ENCODE measurements at regions of chr15 and their contacts with region 1.

Region 1: GRCh38 chr15:68833700-68834331 is 13.1 kb upstream of the ANP32A start:
- DNase-seq: no peak
- ATAC-seq: no peak
- H3K4me3 ChIP-seq: no peak overlapping the region
- H3K27ac ChIP-seq: no peak overlapping the region
- H3K4me1 ChIP-seq: no peaks in the 10 kb centered on the region
- H3K27me3 ChIP-seq: no peaks in the 10 kb centered on the region
- CTCF ChIP-seq: no peak

Region 2: GRCh38 chr15:69562564-69562963 is 728.7 kb after region 1 on chr15:
- CTCF ChIA-PET with region 1: no interaction called
- POLR2A ChIA-PET with region 1: interaction called, 11 read pairs
- in situ Hi-C with region 1: no loop called
- intact Hi-C with region 1: no loop called
- DNase-seq: no peak
- ATAC-seq: no peak
- H3K4me3 ChIP-seq: no peak overlapping the region
- H3K27ac ChIP-seq: no peak overlapping the region
- H3K4me1 ChIP-seq: peaks cover 7% of the 10 kb centered on the region
- H3K27me3 ChIP-seq: no peaks in the 10 kb centered on the region
- CTCF ChIP-seq: no peak

Measured in Panc1 (cell line).